ENCODE measurements at regions of chr14 and their contacts with region 1.

Region 1: DNA sequence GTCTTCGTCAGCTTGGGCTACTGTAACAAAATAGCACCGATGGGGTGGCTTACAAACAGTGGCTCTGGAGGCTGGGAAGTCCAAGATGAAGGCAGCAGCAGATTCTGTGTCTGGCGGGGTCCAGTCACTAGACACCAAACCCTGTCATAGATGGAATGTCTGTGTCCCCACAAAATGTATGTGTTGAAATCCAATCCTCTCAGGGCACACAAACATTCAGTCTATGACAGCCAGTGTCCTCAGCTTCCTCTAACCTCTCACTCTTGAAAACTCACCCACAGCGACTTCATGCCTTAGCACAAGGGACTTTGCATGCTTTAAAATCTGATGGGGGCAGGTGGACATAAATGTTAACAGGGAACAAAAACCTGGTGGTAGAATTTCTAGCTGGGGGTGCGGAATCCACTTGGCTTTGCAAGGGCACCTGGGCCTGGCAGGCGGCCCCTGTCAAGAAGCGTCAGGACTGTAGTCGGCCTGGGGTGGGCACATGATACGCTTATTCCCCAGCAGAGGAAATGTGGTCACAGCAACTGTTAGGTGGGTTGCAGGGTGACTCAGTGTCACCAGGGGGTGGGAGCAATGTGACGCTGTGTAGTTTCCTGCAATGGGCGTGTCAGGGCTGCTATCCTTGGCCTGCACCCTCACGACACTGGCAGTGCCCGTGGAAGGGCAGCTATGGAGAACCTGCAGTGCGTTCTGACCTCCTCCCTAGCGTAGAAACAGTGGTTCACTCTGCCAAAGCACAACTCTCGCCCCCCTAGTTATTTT is 17.7 kb downstream of the RIN3 start:
- DNase-seq: peak; percentile 95
- ATAC-seq: peak; percentile 87
- H3K4me3 Mint-ChIP-seq: peak overlapping the region; percentile 49
- H3K27ac Mint-ChIP-seq: peak overlapping the region; percentile 97
- H3K4me1 Mint-ChIP-seq: peaks cover 80% of the 10 kb centered on the region
- H3K27me3 Mint-ChIP-seq: no peaks in the 10 kb centered on the region

Region 2: DNA sequence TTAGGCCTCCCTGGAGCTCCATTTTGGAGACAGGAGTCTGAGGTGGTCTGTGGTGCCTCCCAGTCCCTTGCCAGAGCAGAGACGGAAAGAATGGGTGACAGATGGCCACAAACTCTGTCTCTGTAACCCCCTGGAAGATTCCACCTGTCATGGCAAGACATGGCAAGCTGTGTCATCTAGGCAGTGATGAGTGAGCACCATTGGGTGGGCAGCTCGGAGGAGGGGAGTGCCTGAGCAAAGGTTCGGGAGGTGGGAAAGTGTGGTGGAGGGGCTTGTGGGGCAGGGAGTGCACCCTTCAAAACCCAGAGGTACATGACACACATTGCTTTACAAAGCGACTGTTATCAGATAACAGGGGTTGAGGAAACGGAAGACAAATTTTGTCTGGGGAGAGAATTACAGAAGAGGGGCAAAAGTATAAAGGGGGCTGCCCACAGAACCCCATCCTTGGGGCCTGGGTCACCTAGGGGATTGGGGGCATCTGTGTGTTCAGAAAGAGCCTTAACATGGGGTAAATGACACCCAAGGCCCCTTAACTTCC is 14.3 kb before region 1 on chr14:
- CTCF ChIA-PET with region 1: interaction called, 13 read pairs
- DNase-seq: peak; percentile 60
- ATAC-seq: peak; percentile 26
- H3K4me3 Mint-ChIP-seq: peak overlapping the region; percentile 79
- H3K27ac Mint-ChIP-seq: peak overlapping the region; percentile 93
- H3K4me1 Mint-ChIP-seq: peaks cover 79% of the 10 kb centered on the region
- H3K27me3 Mint-ChIP-seq: no peaks in the 10 kb centered on the region

Measured in activated CD8-positive, alpha-beta memory T cell treated with anti-CD3 and anti-CD28 coated beads, Interleukin-2, amount 10 ng/mL, durations not matched to agents 7 days and 5 days (primary cell).